Activated naive CD4-positive, alpha-beta T cell treated with anti-CD3 and anti-CD28 coated beads for 36 hours (primary cell): ENCODE measurements at regions of chr12 and their contacts with region 1.

Region 1: GRCh38 chr12:104286538-104287482 is 16.7 kb upstream of the EID3 start:
- DNase-seq: peak; percentile 94
- H3K4me3 Mint-ChIP-seq: peak overlapping the region; percentile 96
- H3K27ac Mint-ChIP-seq: peak overlapping the region; percentile 98
- H3K4me1 Mint-ChIP-seq: peaks cover 12% of the 10 kb centered on the region
- H3K27me3 Mint-ChIP-seq: no peaks in the 10 kb centered on the region

Region 2: GRCh38 chr12:103884316-103884715 is 402.5 kb before region 1 on chr12:
- CTCF ChIA-PET with region 1: no interaction called
- intact Hi-C with region 1: loop called (anchors 5 kb)
- DNase-seq: peak; percentile 75
- H3K4me3 Mint-ChIP-seq: no peak overlapping the region
- H3K27ac Mint-ChIP-seq: no peak overlapping the region
- H3K4me1 Mint-ChIP-seq: peaks cover 22% of the 10 kb centered on the region
- H3K27me3 Mint-ChIP-seq: no peaks in the 10 kb centered on the region

Region 3: DNA sequence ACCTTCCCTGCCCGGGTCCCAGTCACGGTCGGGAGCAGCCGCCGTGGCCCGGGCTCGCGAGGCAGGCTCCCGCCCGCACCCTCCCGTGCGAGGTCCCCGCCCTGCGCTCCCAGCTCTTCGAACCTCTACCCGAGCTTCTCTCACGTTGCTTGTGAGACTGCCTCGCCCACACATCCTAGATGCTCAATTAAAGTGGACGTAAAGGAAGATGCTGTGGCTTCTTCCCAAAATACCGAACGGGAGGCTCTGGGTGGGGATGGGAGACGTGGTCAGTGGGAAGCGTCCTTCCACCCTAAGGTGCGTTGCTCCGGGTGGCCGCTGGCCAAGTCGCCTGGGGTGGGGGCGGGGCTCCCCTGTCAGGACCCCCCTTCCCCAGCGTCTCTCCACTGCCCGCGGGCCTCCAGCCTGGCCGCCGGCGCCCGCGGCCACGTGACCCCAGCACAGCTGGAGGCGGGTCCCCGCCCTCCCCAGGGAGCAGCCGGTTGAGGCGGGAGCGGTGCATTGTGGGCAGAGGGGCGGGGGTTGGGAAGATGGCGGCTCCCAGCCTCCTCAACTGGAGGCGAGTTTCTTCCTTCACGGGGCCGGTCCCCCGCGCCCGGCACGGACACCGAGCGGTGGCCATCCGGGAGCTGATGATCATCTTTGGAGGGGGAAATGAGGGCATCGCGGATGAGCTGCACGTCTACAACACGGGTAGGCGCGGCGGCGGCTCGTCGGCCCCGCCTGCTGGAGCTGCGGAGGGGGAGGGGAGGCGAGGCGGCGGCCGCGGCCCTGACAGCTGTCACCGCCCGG is 222.6 kb before region 1 on chr12 and contains the start of gene HCFC2:
- CTCF ChIA-PET with region 1: no interaction called
- intact Hi-C with region 1: loop called (anchors 1 kb)
- DNase-seq: peak; percentile 91
- H3K4me3 Mint-ChIP-seq: peak within 1 kb of the TSS; percentile 93
- H3K27ac Mint-ChIP-seq: peak within 1 kb of the TSS; percentile 84
- H3K4me1 Mint-ChIP-seq: peaks cover 16% of the 10 kb centered on the region
- H3K27me3 Mint-ChIP-seq: peaks cover 16% of the 10 kb centered on the region
- total RNA-seq, gene HCFC2: 7.4 to 8.3 TPM

Region 4: GRCh38 chr12:104303538-104304151 is 16.8 kb after region 1 on chr12 and contains the start of gene EID3:
- CTCF ChIA-PET with region 1: interaction called, 7 read pairs
- intact Hi-C with region 1: loop called (anchors 1 kb)
- DNase-seq: peak; percentile 90
- H3K4me3 Mint-ChIP-seq: peak within 1 kb of the TSS; percentile 87
- H3K27ac Mint-ChIP-seq: peak within 1 kb of the TSS; percentile 77
- H3K4me1 Mint-ChIP-seq: peaks cover 52% of the 10 kb centered on the region
- H3K27me3 Mint-ChIP-seq: no peaks in the 10 kb centered on the region
- total RNA-seq, gene EID3: 3.4 TPM

Region 5: DNA sequence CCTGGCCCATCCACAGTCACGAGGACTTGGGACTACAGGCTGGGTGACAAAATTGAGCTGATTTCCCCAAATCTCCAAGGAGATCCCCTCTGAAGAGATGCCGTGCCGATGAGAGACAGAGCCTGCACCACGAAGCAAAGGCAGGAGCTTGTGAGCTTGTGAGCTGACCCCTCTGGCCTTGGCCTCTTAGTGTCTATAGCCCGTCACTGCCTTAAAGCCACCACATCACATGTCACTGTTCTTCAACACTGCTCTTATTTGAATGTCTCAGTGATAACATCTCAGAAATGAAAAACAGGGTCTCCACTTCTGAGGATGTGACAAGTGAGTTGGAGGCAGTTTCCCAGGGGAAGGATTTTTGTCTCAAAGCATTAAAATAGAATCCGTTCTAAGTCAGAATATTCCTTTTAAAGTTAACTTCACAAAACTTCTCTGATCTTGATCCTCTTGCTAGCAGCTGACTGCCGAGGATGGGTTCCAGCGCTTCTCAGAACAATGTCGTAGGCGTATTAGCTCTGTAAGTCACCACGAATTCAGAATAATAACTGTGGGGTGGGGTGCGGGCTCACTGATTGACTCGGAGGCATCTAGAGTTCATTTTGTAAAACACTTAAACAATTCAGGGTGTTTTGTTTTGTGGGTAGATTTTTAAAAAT is 207.5 kb after region 1 on chr12:
- CTCF ChIA-PET with region 1: no interaction called
- intact Hi-C with region 1: loop called (anchors 5 kb)
- DNase-seq: peak; percentile 85
- H3K4me3 Mint-ChIP-seq: peak overlapping the region; percentile 52
- H3K27ac Mint-ChIP-seq: peak overlapping the region; percentile 70
- H3K4me1 Mint-ChIP-seq: peaks cover 82% of the 10 kb centered on the region
- H3K27me3 Mint-ChIP-seq: no peaks in the 10 kb centered on the region

Region 6: DNA sequence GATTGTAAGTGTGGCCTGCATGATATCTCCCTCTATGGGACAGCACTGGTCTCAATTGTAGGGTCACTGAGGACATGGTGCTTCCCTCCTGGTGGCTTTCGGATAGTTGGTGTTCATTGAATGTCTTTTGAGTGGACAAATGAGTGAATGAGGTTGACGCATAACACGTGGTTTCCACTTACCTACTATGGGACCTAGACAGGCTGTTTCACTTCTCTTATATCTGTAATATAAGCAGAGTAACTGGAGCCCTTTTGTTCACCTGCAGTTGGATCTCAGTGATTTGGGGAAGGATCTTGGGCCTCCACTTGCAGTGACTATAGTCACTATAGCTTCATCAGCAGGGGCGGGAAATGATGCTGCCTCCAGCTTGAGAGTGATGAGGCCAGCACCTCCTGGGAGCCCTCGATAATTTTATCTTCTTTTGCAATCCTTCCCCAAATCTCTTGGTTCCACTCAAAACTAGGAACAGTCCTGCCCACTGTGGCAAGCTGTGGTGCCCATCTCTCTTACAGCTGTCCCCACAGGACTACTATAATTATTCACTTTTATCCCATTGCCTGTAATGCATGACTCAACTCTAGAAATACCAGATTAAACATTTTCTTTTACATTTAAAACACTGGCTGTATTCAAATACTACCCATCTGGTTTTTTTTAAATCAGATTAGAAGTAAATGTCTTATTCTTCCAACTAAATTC is 412.8 kb after region 1 on chr12:
- CTCF ChIA-PET with region 1: no interaction called
- intact Hi-C with region 1: no loop called
- DNase-seq: peak; percentile 62
- H3K4me3 Mint-ChIP-seq: no peak overlapping the region
- H3K27ac Mint-ChIP-seq: peak overlapping the region; percentile 60
- H3K4me1 Mint-ChIP-seq: peaks cover 46% of the 10 kb centered on the region
- H3K27me3 Mint-ChIP-seq: no peaks in the 10 kb centered on the region

Region 7: GRCh38 chr12:105107494-105108371 is 820.9 kb after region 1 on chr12 and contains the start of gene WASHC4:
- CTCF ChIA-PET with region 1: no interaction called
- intact Hi-C with region 1: loop called (anchors 2 kb)
- DNase-seq: peak; percentile 95
- H3K4me3 Mint-ChIP-seq: peak within 1 kb of the TSS; percentile 90
- H3K27ac Mint-ChIP-seq: peak within 1 kb of the TSS; percentile 91
- H3K4me1 Mint-ChIP-seq: peaks cover 35% of the 10 kb centered on the region
- H3K27me3 Mint-ChIP-seq: peaks cover 13% of the 10 kb centered on the region
- total RNA-seq, gene WASHC4: 23.7 to 26.0 TPM